OCI-LY7 (cell line): ENCODE measurements at regions of chr1 and their contacts with region 1.

Region 1: GRCh38 chr1:119613769-119614720 is 34.0 kb downstream of the ZNF697 start:
- DNase-seq: peak; percentile 68
- H3K4me3 ChIP-seq: no peak overlapping the region
- H3K27ac ChIP-seq: no peak overlapping the region
- H3K4me1 ChIP-seq: no peaks in the 10 kb centered on the region
- CTCF ChIP-seq: peak; percentile 81

Region 2: GRCh38 chr1:119582801-119583200 is 31.2 kb before region 1 on chr1:
- CTCF ChIA-PET with region 1: no interaction called
- POLR2A ChIA-PET with region 1: no interaction called
- intact Hi-C with region 1: no loop called
- DNase-seq: peak; percentile 32
- H3K4me3 ChIP-seq: no peak overlapping the region
- H3K27ac ChIP-seq: no peak overlapping the region
- H3K4me1 ChIP-seq: no peaks in the 10 kb centered on the region
- CTCF ChIP-seq: peak; percentile 71

Region 3: GRCh38 chr1:119675349-119676345 is 61.6 kb after region 1 on chr1:
- CTCF ChIA-PET with region 1: no interaction called
- POLR2A ChIA-PET with region 1: interaction called, 3 read pairs
- intact Hi-C with region 1: loop called (anchors 1 kb)
- DNase-seq: peak; percentile 75
- H3K4me3 ChIP-seq: no peak overlapping the region
- H3K27ac ChIP-seq: no peak overlapping the region
- H3K4me1 ChIP-seq: no peaks in the 10 kb centered on the region
- CTCF ChIP-seq: peak; percentile 96

Region 4: GRCh38 chr1:119743781-119744597 is 129.9 kb after region 1 on chr1:
- CTCF ChIA-PET with region 1: no interaction called
- POLR2A ChIA-PET with region 1: no interaction called
- intact Hi-C with region 1: loop called (anchors 10 kb)
- DNase-seq: peak; percentile 63
- H3K4me3 ChIP-seq: no peak overlapping the region
- H3K27ac ChIP-seq: no peak overlapping the region
- H3K4me1 ChIP-seq: no peaks in the 10 kb centered on the region
- CTCF ChIP-seq: peak; percentile 91

Region 5: DNA sequence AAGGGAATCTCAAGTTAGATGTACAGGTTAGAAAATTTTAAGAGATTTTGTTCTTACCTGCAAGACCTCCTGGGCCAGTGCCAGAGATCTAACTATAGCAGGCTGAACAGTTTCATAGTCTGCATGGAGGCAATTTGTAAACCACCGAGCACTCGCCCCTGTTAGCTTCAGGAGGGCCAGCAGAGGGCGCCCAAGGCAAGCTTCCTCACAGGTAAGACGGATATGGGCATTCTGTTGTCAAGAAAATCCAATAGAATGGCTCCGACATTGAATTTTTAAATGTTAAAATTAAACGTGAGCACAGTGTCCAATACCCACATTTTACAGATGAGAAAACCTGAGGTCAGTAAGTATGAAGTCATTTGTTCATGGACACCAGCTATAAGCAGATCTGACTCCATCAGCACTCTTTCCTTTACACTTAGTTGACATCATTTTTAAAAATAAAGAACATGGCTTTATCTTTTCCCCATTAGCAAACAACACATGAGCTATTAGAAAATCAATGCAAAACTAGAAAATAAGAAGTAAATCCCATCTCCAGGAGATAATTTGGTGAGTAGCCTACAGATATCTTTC is 195.0 kb after region 1 on chr1:
- CTCF ChIA-PET with region 1: no interaction called
- POLR2A ChIA-PET with region 1: no interaction called
- intact Hi-C with region 1: loop called (anchors 10 kb)
- DNase-seq: peak; percentile 71
- H3K4me3 ChIP-seq: no peak overlapping the region
- H3K27ac ChIP-seq: no peak overlapping the region
- H3K4me1 ChIP-seq: no peaks in the 10 kb centered on the region
- CTCF ChIP-seq: peak; percentile 98

Region 6: GRCh38 chr1:119870917-119871596 is 257.0 kb after region 1 on chr1:
- CTCF ChIA-PET with region 1: no interaction called
- POLR2A ChIA-PET with region 1: no interaction called
- intact Hi-C with region 1: loop called (anchors 10 kb)
- DNase-seq: peak; percentile 71
- H3K4me3 ChIP-seq: no peak overlapping the region
- H3K27ac ChIP-seq: no peak overlapping the region
- H3K4me1 ChIP-seq: no peaks in the 10 kb centered on the region
- CTCF ChIP-seq: peak; percentile 95